ENCODE measurements at regions of chr18 and their contacts with region 1.

Region 1: DNA sequence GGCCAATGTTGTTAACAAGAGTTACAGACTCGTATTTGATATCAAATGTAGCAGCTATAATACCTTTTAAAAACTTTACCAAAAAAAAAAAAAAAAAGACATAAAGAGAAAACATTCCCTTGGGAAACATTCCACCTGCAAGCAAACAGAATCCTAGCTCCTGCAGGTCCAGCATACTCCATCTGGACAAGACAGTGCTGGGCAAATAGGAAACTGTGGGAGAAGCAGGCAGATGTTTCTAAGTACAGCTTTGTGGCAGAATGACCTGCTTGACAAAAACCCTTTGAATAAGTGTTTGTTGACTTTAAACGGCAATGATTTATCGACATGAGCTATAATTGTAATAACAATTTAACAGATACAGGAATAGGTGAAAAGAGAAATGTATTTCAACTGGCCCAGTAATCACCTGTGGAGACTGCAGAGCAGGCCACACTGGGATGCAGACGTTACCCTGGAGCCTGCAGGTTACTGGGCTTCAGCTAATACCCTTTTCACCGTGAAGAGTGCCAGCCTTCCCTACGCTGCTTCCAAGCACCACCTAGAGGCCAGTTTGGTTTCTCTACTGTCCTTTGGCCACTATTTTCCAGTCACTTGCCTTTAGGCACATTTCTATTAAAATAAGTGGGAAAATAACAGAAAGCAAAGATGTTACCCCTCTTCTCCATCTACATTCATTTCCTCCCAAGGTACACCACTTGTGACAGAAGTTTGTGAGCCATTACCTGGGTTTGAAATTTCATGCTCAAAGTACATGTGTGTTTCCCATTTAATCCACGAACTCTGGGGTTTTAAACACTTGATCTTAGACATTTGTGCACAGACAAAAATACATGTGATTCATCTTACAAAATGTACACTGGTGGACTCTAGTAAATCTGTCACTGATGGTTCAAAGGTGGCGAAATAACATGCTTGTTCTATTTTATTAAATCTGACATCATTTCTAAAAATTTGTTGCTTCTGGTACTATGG is 96.9 kb upstream of the ZNF397 start:
- DNase-seq: peak; percentile 80
- H3K4me3 ChIP-seq: no peak overlapping the region
- H3K27ac ChIP-seq: no peak overlapping the region
- H3K4me1 ChIP-seq: no peaks in the 10 kb centered on the region
- H3K27me3 ChIP-seq: no peaks in the 10 kb centered on the region
- CTCF ChIP-seq: peak; percentile 57 to 80
- POLR2A ChIP-seq: no peak

Region 2: GRCh38 chr18:34999756-35000289 is 144.1 kb before region 1 on chr18:
- CTCF ChIA-PET with region 1: interaction called, 12 read pairs
- POLR2A ChIA-PET with region 1: no interaction called
- dilution Hi-C with region 1: no loop called
- intact Hi-C with region 1: no loop called
- DNase-seq: no peak
- H3K4me3 ChIP-seq: no peak overlapping the region
- H3K27ac ChIP-seq: no peak overlapping the region
- H3K4me1 ChIP-seq: no peaks in the 10 kb centered on the region
- H3K27me3 ChIP-seq: peaks cover 0 to 3% of the 10 kb centered on the region in 2 experiments
- CTCF ChIP-seq: no peak
- POLR2A ChIP-seq: no peak

Region 3: DNA sequence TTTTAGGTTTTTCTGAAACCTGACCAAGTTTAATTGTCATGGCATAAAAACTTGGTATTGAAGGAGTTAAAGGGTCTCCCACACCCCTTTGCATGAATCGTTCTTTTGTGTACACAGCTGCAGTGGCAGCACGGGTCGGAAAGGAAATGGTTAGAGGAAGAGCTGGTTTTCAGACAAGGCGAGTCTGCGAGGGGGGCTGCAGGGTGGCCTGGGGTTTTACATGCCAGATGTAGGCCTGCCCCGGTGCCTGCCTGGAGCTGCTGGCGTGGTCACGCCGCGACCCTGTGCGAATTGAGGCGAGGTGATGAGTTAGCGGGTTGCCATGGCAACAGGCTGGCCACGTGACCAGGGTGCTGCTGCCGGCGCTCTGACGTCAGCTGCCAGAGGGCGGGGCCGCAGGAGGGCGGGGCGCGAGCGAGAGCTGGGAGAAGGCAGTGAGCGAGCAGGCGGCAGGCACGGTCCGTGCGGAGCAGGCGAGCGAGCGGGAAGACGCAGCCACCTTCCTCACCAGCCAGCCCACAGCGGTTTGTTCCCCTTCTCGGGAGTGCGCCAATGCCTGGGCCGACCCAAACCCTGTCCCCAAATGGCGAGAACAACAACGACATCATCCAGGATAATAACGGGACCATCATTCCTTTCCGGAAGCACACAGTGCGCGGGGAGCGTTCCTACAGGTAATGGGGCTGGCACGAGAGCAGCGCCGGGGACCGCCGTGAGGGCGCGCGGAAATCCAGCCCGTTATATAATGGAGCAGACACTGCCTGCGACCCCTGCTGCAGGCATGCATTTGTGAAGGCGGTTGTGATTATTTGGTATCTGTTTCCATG is 102.7 kb before region 1 on chr18 and contains the start of gene MAPRE2:
- CTCF ChIA-PET with region 1: interaction called, 53 read pairs
- POLR2A ChIA-PET with region 1: no interaction called
- dilution Hi-C with region 1: no loop called
- intact Hi-C with region 1: no loop called
- DNase-seq: peak; percentile 99
- H3K4me3 ChIP-seq: peak within 1 kb of the TSS; percentile 88 to 99 (median 89)
- H3K27ac ChIP-seq: peak within 1 kb of the TSS; percentile 80
- H3K4me1 ChIP-seq: peaks cover 61% of the 10 kb centered on the region
- H3K27me3 ChIP-seq: no peaks in the 10 kb centered on the region
- CTCF ChIP-seq: no peak
- POLR2A ChIP-seq: peak; percentile 96
- total RNA-seq, gene MAPRE2: 111 and 117 TPM in 2 replicates

Region 4: GRCh38 chr18:35127201-35127600 is 16.7 kb before region 1 on chr18:
- CTCF ChIA-PET with region 1: interaction called, 19 read pairs
- POLR2A ChIA-PET with region 1: no interaction called
- dilution Hi-C with region 1: no loop called
- intact Hi-C with region 1: no loop called
- DNase-seq: peak; percentile 21
- H3K4me3 ChIP-seq: no peak overlapping the region
- H3K27ac ChIP-seq: no peak overlapping the region
- H3K4me1 ChIP-seq: peaks cover 9% of the 10 kb centered on the region
- H3K27me3 ChIP-seq: no peaks in the 10 kb centered on the region
- CTCF ChIP-seq: peak in 1 of 2 donors; percentile 28
- POLR2A ChIP-seq: no peak

Region 5: GRCh38 chr18:35174093-35174731 is 30.3 kb after region 1 on chr18:
- CTCF ChIA-PET with region 1: no interaction called
- POLR2A ChIA-PET with region 1: no interaction called
- dilution Hi-C with region 1: no loop called
- intact Hi-C with region 1: no loop called
- DNase-seq: no peak
- H3K4me3 ChIP-seq: no peak overlapping the region
- H3K27ac ChIP-seq: no peak overlapping the region
- H3K4me1 ChIP-seq: no peaks in the 10 kb centered on the region
- H3K27me3 ChIP-seq: peaks cover 0 to 12% of the 10 kb centered on the region in 2 experiments
- CTCF ChIP-seq: no peak
- POLR2A ChIP-seq: no peak

Measured in endothelial cell of umbilical vein (primary cell).